Mucosa of descending colon (tissue), 3 donors: ENCODE measurements at regions of chr9 and their contacts with region 1.

Region 1: GRCh38 chr9:123990427-123990826 is 21.1 kb upstream of the LHX2 start:
- DNase-seq: no peak
- ATAC-seq: no peak
- H3K4me3 ChIP-seq: no peak overlapping the region
- H3K4me1 ChIP-seq: no peaks in the 10 kb centered on the region
- CTCF ChIP-seq: no peak

Region 2: DNA sequence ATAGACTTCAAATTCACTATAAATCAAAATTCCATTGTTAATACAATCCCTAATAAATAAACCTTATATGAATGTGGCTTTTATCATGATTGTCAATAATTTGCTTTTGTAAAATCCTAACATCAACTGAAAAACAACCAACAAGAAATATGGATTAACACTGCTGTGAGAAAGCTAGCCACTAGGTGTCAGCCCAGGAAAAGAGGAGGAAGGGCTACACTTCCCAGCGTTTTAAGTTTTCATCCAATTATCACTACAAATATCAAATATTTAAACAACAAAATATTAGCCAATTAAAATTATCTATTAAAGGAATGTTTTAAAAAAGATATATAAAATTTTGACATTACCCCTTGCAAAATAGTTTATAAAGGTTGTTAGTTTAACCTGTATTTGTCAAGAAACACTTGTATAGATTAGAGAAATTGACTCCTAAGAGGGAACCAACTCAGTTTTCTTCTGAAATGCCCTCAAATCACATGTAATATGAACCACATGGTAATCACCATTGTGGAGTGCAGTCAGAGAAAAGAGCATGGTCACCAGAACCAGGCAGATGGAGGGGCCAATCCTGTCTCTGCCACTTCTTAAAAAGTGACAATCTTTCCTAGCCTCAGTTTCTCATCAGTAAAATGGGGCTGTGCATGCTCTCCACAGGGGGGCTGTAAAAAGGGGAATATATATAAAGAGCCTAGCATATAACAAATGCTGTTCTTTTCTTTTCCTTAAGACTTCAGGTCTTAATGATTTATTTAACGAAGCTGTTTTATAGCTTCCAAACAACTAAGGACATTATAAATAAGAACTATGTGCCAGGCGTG is 446.2 kb before region 1 on chr9:
- intact Hi-C with region 1: no loop called
- DNase-seq: peak in 1 of 3 donors; percentile 66
- ATAC-seq: peak; percentile 51
- H3K4me3 ChIP-seq: no peak overlapping the region
- H3K4me1 ChIP-seq: no peaks in the 10 kb centered on the region
- CTCF ChIP-seq: peak; percentile 45

Region 3: DNA sequence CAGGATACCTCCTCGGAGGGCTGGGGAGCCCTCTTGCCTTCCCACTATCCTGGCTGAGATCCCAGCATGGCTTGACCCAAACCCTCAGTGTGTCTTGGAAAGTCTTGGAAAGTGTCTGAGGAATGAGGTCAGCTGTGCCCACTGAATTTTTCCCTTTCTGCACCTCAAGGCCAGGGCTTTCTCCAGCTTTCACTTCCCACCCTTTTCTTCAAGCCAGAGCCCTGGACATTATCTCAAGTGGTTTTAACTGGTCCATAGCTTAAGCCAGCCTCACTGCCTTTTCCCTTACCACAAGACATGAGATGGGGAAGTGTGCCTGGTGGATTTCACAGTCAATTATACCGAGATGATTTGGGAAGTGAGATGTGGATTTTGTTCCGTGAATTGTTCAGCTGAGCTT is 14.6 kb before region 1 on chr9:
- intact Hi-C with region 1: loop called in 1 of 2 experiments (anchors 2 kb)
- DNase-seq: no peak
- ATAC-seq: no peak
- H3K4me3 ChIP-seq: no peak overlapping the region
- H3K4me1 ChIP-seq: no peaks in the 10 kb centered on the region
- CTCF ChIP-seq: no peak